ENCODE measurements at regions of chr16 and their contacts with region 1.

Region 1: GRCh38 chr16:22031483-22032083 is 23.7 kb downstream of the MOSMO start:
- DNase-seq: no peak
- H3K4me3 ChIP-seq: no peak overlapping the region
- H3K4me3 Mint-ChIP-seq: no peak overlapping the region
- H3K27ac Mint-ChIP-seq: no peak overlapping the region
- H3K4me1 ChIP-seq: peaks cover 17% of the 10 kb centered on the region
- H3K4me1 Mint-ChIP-seq: peaks cover 18% of the 10 kb centered on the region
- H3K27me3 ChIP-seq: no peaks in the 10 kb centered on the region
- H3K27me3 Mint-ChIP-seq: no peaks in the 10 kb centered on the region
- CTCF ChIP-seq: no peak

Region 2: DNA sequence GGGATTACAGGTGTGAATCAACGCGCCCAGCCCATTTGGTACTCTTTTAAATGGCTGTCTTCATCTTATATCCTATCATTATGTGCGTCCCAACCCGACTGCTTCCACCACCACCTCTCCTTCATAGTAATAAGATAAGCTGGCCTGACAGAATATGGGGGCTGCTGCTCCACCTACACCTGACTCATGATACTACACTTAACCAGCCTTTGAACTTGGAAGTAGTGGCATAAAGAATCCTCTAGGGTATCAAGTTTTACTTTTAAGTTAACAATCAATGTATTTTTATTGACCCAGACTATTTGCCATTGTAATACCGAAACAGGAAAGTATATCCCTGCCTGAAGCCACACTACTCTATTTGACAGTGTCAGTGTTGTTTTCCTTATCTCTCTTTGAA is 49.5 kb before region 1 on chr16:
- CTCF ChIA-PET with region 1: no interaction called
- POLR2A ChIA-PET with region 1: no interaction called
- intact Hi-C with region 1: no loop called
- DNase-seq: no peak
- H3K4me3 ChIP-seq: no peak overlapping the region
- H3K4me3 Mint-ChIP-seq: no peak overlapping the region
- H3K27ac Mint-ChIP-seq: no peak overlapping the region
- H3K4me1 ChIP-seq: no peaks in the 10 kb centered on the region
- H3K4me1 Mint-ChIP-seq: no peaks in the 10 kb centered on the region
- H3K27me3 ChIP-seq: no peaks in the 10 kb centered on the region
- H3K27me3 Mint-ChIP-seq: no peaks in the 10 kb centered on the region
- CTCF ChIP-seq: peak in 1 of 2 experiments; percentile 6

Region 3: DNA sequence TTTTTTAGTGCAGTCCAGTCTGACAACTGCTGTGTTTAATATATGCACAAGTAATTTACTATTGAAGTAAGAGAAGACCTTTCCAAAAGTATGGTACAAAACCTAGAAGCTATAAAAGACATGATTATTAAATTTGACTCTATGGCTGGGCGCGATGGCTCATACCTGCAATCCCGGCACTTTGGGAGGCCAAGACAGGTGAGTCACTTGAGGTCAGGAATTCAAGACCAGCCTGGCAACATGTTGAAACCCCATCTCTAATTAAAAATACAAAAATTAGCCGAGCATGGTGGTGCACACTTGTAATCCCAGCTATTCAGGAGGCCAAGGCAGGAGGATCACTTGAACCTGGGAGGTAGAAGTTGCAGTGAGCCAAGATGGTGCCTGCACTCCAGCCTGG is 19.4 kb after region 1 on chr16:
- CTCF ChIA-PET with region 1: interaction called, 4 read pairs
- POLR2A ChIA-PET with region 1: no interaction called
- intact Hi-C with region 1: loop called (anchors 2 kb)
- DNase-seq: no peak
- H3K4me3 ChIP-seq: no peak overlapping the region
- H3K4me3 Mint-ChIP-seq: no peak overlapping the region
- H3K27ac Mint-ChIP-seq: no peak overlapping the region
- H3K4me1 ChIP-seq: no peaks in the 10 kb centered on the region; the same call in 1 of the 2 replicates
- H3K4me1 Mint-ChIP-seq: no peaks in the 10 kb centered on the region
- H3K27me3 ChIP-seq: no peaks in the 10 kb centered on the region
- H3K27me3 Mint-ChIP-seq: no peaks in the 10 kb centered on the region
- CTCF ChIP-seq: no peak

Region 4: GRCh38 chr16:22077700-22078313 is 46.2 kb after region 1 on chr16:
- CTCF ChIA-PET with region 1: interaction called, 7 read pairs
- POLR2A ChIA-PET with region 1: no interaction called
- intact Hi-C with region 1: loop called (anchors 5 kb)
- DNase-seq: peak; percentile 49 to 70
- H3K4me3 ChIP-seq: no peak overlapping the region
- H3K4me3 Mint-ChIP-seq: no peak overlapping the region
- H3K27ac Mint-ChIP-seq: no peak overlapping the region
- H3K4me1 ChIP-seq: no peaks in the 10 kb centered on the region
- H3K4me1 Mint-ChIP-seq: no peaks in the 10 kb centered on the region
- H3K27me3 ChIP-seq: no peaks in the 10 kb centered on the region
- H3K27me3 Mint-ChIP-seq: no peaks in the 10 kb centered on the region
- CTCF ChIP-seq: peak; percentile 81 to 83

Region 5: GRCh38 chr16:22165508-22166285 is 134.1 kb after region 1 on chr16:
- CTCF ChIA-PET with region 1: no interaction called
- POLR2A ChIA-PET with region 1: no interaction called
- intact Hi-C with region 1: no loop called
- DNase-seq: no peak
- H3K4me3 ChIP-seq: no peak overlapping the region
- H3K4me3 Mint-ChIP-seq: no peak overlapping the region
- H3K27ac Mint-ChIP-seq: no peak overlapping the region
- H3K4me1 ChIP-seq: no peaks in the 10 kb centered on the region
- H3K4me1 Mint-ChIP-seq: no peaks in the 10 kb centered on the region
- H3K27me3 ChIP-seq: no peaks in the 10 kb centered on the region; the same call in 1 of the 2 replicates
- H3K27me3 Mint-ChIP-seq: peaks cover 6% of the 10 kb centered on the region
- CTCF ChIP-seq: no peak